Motor neuron (in vitro differentiated cells): ENCODE measurements at regions of chr3 and their contacts with region 1.

Region 1: DNA sequence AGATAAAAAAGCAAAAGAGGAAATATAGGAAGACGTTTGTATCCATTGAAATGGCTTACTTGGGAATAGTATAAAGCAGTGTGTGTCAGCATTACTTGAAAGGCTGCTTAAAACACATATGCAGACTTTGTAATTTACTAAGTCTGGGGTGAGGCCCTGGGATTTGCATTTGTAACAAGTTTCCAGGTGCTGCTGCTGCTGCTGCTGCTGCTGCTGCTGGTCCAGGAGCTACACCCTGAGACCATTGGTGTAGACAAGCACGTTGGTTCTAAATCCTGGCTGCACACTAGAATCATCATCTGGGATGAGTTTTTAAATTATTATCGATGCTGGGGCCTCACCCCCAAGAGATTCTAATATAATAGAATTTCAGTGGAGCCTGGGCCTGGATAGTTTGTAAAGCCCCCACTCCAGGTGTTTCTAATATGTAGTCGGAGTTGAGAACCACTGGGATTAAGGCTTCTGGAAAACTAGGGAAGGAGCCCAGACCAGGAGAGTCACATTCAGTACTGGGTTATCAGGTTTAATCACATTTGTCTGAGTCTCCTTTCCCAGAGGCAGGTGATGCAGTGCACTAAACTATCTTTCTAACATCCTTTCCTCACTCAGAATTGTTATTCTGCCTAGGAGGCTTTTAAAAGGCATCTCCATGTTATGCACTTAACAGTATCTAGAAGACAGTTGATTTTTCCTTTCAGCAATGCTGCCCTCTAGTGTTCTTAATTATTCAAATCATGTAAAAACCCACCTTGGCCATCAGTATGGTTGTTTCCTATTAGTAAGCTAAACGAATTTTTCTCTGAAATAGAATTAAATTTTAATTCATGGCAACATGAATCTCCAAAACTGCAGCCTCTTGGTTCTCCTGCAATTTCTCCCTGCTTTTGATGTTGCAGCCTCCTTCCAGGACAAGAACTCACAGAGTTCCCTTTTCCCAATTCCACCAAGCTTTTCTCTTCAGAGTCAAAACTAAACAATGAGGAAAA is 45.4 kb downstream of the SSR3 start:
- ATAC-seq: peak; percentile 50 to 85 (median 71)
- H3K4me3 ChIP-seq: no peak overlapping the region
- H3K27ac ChIP-seq: no peak overlapping the region
- H3K4me1 ChIP-seq: no peaks in the 10 kb centered on the region

Region 2: GRCh38 chr3:156024904-156025533 is 484.5 kb before region 1 on chr3:
- in situ Hi-C with region 1: loop called in 3 of 9 experiments (anchors 25 kb)
- ATAC-seq: peak in 5 of 8 experiments; percentile 33 to 92 (median 78)
- H3K4me3 ChIP-seq: no peak overlapping the region
- H3K27ac ChIP-seq: no peak overlapping the region
- H3K4me1 ChIP-seq: peaks cover 2 to 10% of the 10 kb centered on the region in 2 donors

Region 3: GRCh38 chr3:156685198-156685597 is 175.7 kb after region 1 on chr3:
- in situ Hi-C with region 1: no loop called
- ATAC-seq: peak in 4 of 8 experiments; percentile 12 to 59 (median 30)
- H3K4me3 ChIP-seq: no peak overlapping the region
- H3K27ac ChIP-seq: no peak overlapping the region
- H3K4me1 ChIP-seq: peaks cover 31 to 32% of the 10 kb centered on the region in 2 donors

Region 4: DNA sequence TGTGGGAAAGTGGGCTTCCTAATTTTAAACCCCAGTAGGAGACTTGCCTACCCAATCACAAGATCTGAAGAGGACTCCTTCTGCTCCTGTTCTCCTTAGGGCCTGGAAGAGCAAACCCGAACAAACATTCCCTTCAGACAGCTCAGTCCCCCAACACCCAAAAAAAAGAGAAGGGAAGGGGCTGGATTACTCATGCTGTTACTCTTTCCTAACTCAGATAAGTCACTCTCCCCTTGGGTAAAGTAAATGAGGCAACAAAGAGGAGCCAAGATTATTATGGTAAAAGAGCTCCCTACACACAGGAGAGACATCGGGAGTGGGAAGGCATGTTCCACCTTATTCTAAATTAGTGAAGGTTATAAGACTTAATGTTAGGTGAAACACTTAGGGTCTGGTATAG is 298.5 kb after region 1 on chr3:
- in situ Hi-C with region 1: no loop called
- ATAC-seq: no peak
- H3K4me3 ChIP-seq: no peak overlapping the region
- H3K27ac ChIP-seq: no peak overlapping the region
- H3K4me1 ChIP-seq: no peaks in the 10 kb centered on the region